ENCODE measurements at regions of chr16 and their contacts with region 1.

Region 1: GRCh38 chr16:84484579-84485254 is 19.7 kb downstream of the MEAK7 start:
- DNase-seq: peak; percentile 54 to 73 (median 71)
- ATAC-seq: peak; percentile 85 to 96 (median 90)
- H3K4me3 ChIP-seq: no peak overlapping the region
- H3K27ac ChIP-seq: no peak overlapping the region
- H3K4me1 ChIP-seq: no peaks in the 10 kb centered on the region
- H3K27me3 ChIP-seq: no peaks in the 10 kb centered on the region
- CTCF ChIP-seq: peak; percentile 72 to 80 (median 78)
- POLR2A ChIP-seq: no peak

Region 2: GRCh38 chr16:84277237-84277823 is 207.4 kb before region 1 on chr16:
- intact Hi-C with region 1: loop called in 1 of 2 experiments (anchors 5 kb)
- DNase-seq: peak; percentile 65 to 73 (median 68)
- ATAC-seq: peak; percentile 62 to 72 (median 70)
- H3K4me3 ChIP-seq: no peak overlapping the region
- H3K27ac ChIP-seq: no peak overlapping the region
- H3K4me1 ChIP-seq: no peaks in the 10 kb centered on the region
- H3K27me3 ChIP-seq: no peaks in the 10 kb centered on the region
- CTCF ChIP-seq: peak; percentile 58 to 82 (median 80)
- POLR2A ChIP-seq: no peak

Region 3: DNA sequence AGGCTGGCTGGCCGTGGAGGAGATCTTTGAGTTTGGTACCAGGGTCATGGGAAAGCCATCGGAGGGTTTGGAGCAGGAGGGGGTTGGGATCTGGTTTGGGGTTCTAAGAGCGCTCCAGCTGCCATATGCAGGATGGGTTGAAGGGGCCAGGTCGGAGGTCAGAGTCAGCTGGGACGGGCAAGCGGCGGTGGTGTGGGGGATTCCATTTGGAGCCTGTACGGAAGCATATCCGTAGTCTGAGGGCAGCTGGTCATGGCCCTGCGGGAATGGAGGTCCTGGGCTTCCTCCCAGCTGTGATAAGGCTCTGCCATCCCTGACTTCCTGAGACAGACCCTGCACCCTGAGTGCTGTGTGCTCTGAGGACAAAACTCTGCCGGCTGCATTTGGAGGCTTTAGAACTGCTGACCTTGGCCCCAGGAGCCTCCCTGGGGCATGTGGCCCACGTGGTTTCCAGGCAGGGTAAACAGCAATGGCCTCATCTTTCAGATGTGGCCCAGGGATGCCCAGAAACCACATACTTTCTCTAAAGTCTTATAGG is 69.9 kb before region 1 on chr16:
- intact Hi-C with region 1: no loop called
- DNase-seq: no peak
- ATAC-seq: peak; percentile 47 to 67 (median 53)
- H3K4me3 ChIP-seq: no peak overlapping the region
- H3K27ac ChIP-seq: no peak overlapping the region
- H3K4me1 ChIP-seq: no peaks in the 10 kb centered on the region
- H3K27me3 ChIP-seq: no peaks in the 10 kb centered on the region
- CTCF ChIP-seq: no peak
- POLR2A ChIP-seq: no peak